ENCODE measurements at regions of chr7 and their contacts with region 1.

Region 1: GRCh38 chr7:93442478-93443224 is 131.9 kb downstream of the CALCR start:
- DNase-seq: peak; percentile 34
- ATAC-seq: peak; percentile 98
- H3K4me3 ChIP-seq: no peak overlapping the region
- H3K27ac ChIP-seq: no peak overlapping the region
- H3K4me1 ChIP-seq: no peaks in the 10 kb centered on the region
- H3K27me3 ChIP-seq: peaks cover 22% of the 10 kb centered on the region; the same call in 1 of the 2 replicates
- CTCF ChIP-seq: peak; percentile 46 to 92 (median 89); a peak in 5 of 6 replicates
- POLR2A ChIP-seq: no peak
- RAD21 ChIP-seq: peak; percentile 65

Region 2: GRCh38 chr7:93453264-93453663 is 10.6 kb after region 1 on chr7:
- CTCF ChIA-PET with region 1: interaction called, 18 read pairs
- POLR2A ChIA-PET with region 1: no interaction called
- RAD21 ChIA-PET with region 1: no interaction called
- intact Hi-C with region 1: no loop called
- DNase-seq: no peak
- ATAC-seq: no peak
- H3K4me3 ChIP-seq: no peak overlapping the region
- H3K27ac ChIP-seq: no peak overlapping the region
- H3K4me1 ChIP-seq: no peaks in the 10 kb centered on the region
- H3K27me3 ChIP-seq: peaks cover 19% of the 10 kb centered on the region; the same call in 1 of the 2 replicates
- CTCF ChIP-seq: no peak
- POLR2A ChIP-seq: no peak
- RAD21 ChIP-seq: no peak

Region 3: GRCh38 chr7:94223375-94224070 is 780.9 kb after region 1 on chr7:
- CTCF ChIA-PET with region 1: no interaction called
- POLR2A ChIA-PET with region 1: no interaction called
- RAD21 ChIA-PET with region 1: no interaction called
- intact Hi-C with region 1: loop called (anchors 5 kb)
- DNase-seq: peak; percentile 41
- ATAC-seq: peak; percentile 80
- H3K4me3 ChIP-seq: 0 out of 4 replicates have a peak overlapping the region, but pooled peaks of 1 of the 2 experiments have one; percentile 1
- H3K27ac ChIP-seq: no peak overlapping the region
- H3K4me1 ChIP-seq: peaks cover 0 to 9% of the 10 kb centered on the region in 2 experiments; a peak in 1 of 4 replicates
- H3K27me3 ChIP-seq: no peaks in the 10 kb centered on the region
- CTCF ChIP-seq: peak; percentile 35 to 52 (median 50); a peak in 4 of 6 replicates
- POLR2A ChIP-seq: no peak
- RAD21 ChIP-seq: peak; percentile 65